ENCODE measurements at regions of chr17 and their contacts with region 1.

Region 1: GRCh38 chr17:49748791-49749190 is 15.1 kb downstream of the FAM117A start:
- DNase-seq: peak; percentile 27
- H3K4me3 Mint-ChIP-seq: peak overlapping the region; percentile 78
- H3K27ac Mint-ChIP-seq: peak overlapping the region; percentile 93
- H3K4me1 Mint-ChIP-seq: peaks cover 72% of the 10 kb centered on the region
- H3K27me3 Mint-ChIP-seq: no peaks in the 10 kb centered on the region

Region 2: DNA sequence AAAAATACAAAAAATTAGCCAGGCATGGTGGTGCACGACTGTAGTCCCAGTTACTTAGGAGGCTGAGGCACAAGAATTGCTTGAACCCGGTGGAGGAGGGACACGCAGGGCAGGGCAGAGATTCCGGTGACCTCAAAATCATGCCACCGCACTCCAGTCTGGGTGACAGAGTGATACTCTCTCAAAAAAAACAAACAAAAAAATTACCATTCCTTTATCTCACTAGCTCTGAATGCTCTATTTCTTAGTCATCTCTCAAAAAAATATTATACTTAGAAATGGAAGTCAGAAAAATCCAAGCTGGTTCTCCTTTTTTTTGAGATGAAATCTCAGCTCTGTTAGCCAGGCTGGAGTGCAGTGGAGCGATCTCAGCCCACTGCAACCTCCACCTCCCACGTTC is 111.7 kb before region 1 on chr17:
- intact Hi-C with region 1: no loop called
- DNase-seq: no peak
- H3K4me3 Mint-ChIP-seq: no peak overlapping the region
- H3K27ac Mint-ChIP-seq: no peak overlapping the region
- H3K4me1 Mint-ChIP-seq: no peaks in the 10 kb centered on the region
- H3K27me3 Mint-ChIP-seq: no peaks in the 10 kb centered on the region

Region 3: GRCh38 chr17:49694847-49695683 is 53.7 kb before region 1 on chr17:
- intact Hi-C with region 1: no loop called
- DNase-seq: peak; percentile 57
- H3K4me3 Mint-ChIP-seq: no peak overlapping the region
- H3K27ac Mint-ChIP-seq: peak overlapping the region; percentile 90
- H3K4me1 Mint-ChIP-seq: peaks cover 22% of the 10 kb centered on the region
- H3K27me3 Mint-ChIP-seq: no peaks in the 10 kb centered on the region

Region 4: DNA sequence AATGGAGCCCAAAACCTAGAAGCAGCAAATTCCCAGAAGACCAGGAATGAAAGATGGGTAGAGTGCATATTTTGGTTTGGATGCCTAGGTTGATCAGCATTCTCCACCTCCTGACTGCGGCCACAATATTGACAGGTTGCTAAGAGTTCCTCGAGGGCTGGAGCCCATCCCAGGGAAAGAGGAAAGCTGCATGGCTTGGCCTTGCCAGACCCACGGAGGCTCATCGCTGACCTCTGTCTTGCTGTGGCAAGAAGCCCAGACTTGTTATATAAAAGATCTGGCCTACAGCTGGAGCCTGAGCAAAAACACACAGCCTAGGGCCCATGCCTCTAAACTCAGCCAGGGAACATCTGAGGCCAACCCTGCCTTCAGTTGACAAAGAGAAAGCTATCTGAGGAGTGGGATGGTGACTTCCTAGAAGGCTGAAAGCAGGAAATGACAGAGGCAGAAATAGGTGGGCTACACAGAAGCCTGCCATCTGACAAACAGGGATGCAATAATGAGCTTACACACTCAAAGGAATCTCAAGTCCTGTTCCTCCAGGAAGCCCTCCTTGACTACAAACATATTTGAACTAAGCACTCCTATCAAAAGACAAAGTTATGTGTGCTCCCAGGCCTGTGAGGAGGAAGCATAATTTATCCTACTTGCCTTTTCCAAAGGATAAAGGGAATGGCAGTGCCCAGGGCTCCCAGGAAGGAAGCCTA is 18.6 kb before region 1 on chr17:
- intact Hi-C with region 1: no loop called
- DNase-seq: no peak
- H3K4me3 Mint-ChIP-seq: no peak overlapping the region
- H3K27ac Mint-ChIP-seq: no peak overlapping the region
- H3K4me1 Mint-ChIP-seq: peaks cover 37% of the 10 kb centered on the region
- H3K27me3 Mint-ChIP-seq: no peaks in the 10 kb centered on the region

Region 5: DNA sequence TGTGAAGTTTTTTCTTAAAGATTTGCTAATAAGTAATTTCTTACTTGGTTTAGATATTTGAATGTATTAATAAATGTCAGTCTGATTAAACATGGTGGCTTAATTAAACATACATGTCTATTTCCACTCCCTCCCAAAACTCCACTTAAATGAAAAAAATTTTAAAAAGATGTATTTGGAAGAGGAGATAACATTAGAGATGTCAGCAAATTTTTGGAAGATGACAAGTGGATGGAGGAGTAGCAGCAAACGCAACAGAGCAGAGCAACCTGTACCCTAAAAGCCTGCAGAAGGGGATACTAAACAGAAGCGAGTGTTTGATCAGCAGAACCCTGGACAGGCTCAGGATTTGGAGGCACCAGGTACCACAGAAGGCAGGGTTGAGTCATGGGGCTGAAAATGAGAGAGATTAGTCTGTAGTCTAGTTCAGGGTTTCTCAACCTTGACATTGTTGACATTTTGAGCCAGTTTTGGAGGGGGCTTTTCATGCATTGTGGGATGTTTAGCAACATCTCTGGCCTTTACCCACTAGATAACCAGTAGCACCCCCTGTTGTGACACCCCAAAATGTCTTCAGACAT is 988.4 kb after region 1 on chr17:
- intact Hi-C with region 1: loop called (anchors 5 kb)
- DNase-seq: no peak
- H3K4me3 Mint-ChIP-seq: no peak overlapping the region
- H3K27ac Mint-ChIP-seq: no peak overlapping the region
- H3K4me1 Mint-ChIP-seq: peaks cover 38% of the 10 kb centered on the region
- H3K27me3 Mint-ChIP-seq: no peaks in the 10 kb centered on the region

Measured in activated T-helper 1 cell treated with anti-CD3 and anti-CD28 coated beads, Interleukin-12 subunit alpha, Interleukin-12 subunit beta, Interleukin-2, Interleukin-4 antibody, amounts not matched to agents 30 ng/mL and 10 ng/mL and 1 ng/mL, durations not matched to agents 14 hours and 24 hours and 36 hours (primary cell).